CD14-positive monocyte (primary cell): ENCODE measurements at regions of chr12 and their contacts with region 1.

Region 1: DNA sequence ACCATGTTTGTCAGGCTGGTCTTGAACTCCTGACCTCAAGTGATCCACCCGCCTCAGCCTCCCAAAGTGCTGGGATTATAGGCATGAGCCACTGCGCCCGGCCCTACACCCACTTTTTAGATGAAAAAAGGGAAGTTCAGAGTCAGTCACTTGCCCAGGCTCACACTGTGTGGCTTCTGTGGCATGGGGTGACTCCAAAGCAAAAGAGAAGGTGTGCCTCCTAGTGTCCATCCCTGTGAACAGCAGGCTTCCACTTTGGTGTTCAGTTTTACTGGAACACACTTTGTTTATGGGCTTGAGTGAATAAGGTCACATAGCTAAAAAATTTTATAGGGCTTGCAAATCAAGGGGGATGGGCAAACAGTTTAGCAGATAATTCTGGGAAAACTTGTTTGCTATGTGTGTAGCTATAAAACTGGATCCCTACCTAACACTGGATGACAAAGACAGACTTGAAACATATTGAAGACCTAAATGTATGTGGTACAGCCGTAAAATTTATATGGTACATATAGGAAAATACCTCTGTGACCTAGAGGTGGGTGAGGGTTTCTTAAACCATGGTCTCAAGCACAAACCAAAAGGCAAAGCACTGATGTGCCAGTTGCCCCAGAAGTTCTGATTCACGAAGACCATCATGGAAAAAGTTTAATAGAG is 54.9 kb downstream of the EID3 start:
- DNase-seq: peak; percentile 76 to 84 (median 83)
- H3K4me3 ChIP-seq: no peak overlapping the region
- H3K4me3 Mint-ChIP-seq: no peak overlapping the region
- H3K27ac ChIP-seq: no peak overlapping the region
- H3K27ac Mint-ChIP-seq: peak overlapping the region in 1 of 7 donors; percentile 25
- H3K4me1 ChIP-seq: no peaks in the 10 kb centered on the region
- H3K4me1 Mint-ChIP-seq: peaks cover 2% of the 10 kb centered on the region
- H3K27me3 ChIP-seq: no peaks in the 10 kb centered on the region
- H3K27me3 Mint-ChIP-seq: no peaks in the 10 kb centered on the region
- CTCF ChIP-seq: peak; percentile 92

Region 2: DNA sequence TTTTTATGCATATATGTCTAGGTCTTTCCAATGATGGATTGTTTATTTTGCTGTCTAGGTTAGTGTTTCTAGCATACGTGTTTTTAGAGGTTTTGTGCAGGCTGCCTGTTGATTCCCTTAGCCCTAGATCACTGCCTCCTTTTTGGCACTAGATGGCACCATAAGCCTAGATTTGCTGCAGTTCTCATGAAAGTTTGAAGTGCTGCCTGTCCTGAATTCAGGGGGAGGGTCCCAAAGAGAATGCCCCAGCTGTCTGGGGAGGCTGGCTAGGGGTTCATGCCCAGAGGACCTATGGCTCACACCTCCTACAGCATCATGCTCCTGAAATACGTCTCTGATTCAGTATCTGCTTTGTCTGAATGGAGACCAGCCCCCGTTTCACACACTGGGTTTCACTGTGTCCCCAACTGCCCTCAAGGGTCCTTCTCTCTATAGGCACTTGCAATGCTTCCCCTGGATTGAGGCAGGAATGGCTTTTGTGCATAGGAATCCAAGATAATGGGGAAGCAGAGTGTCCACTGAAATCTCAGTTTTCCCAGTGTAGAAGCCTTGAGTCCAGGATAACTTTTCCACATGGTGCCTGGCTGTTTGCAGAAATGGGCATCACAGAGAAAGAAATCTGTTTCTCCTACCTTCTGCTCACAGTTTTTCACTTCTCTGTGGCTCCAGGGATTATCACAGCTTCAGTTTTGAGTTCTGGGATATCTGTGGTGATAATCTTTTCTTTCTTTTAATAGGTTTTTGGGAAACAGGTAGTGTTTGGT is 157.1 kb before region 1 on chr12:
- intact Hi-C with region 1: loop called (anchors 2 to 5 kb)
- DNase-seq: peak; percentile 37 to 61 (median 48)
- H3K4me3 ChIP-seq: no peak overlapping the region
- H3K4me3 Mint-ChIP-seq: peak overlapping the region in 1 of 2 donors; percentile 56
- H3K27ac ChIP-seq: no peak overlapping the region
- H3K27ac Mint-ChIP-seq: no peak overlapping the region
- H3K4me1 ChIP-seq: no peaks in the 10 kb centered on the region
- H3K4me1 Mint-ChIP-seq: peaks cover 2% of the 10 kb centered on the region
- H3K27me3 ChIP-seq: no peaks in the 10 kb centered on the region
- H3K27me3 Mint-ChIP-seq: peaks cover 0 to 1% (median 0%) of the 10 kb centered on the region in 3 donors
- CTCF ChIP-seq: peak; percentile 86